Posterior vena cava (tissue), 2 donors: ENCODE measurements at regions of chr19 and their contacts with region 1.

Region 1: DNA sequence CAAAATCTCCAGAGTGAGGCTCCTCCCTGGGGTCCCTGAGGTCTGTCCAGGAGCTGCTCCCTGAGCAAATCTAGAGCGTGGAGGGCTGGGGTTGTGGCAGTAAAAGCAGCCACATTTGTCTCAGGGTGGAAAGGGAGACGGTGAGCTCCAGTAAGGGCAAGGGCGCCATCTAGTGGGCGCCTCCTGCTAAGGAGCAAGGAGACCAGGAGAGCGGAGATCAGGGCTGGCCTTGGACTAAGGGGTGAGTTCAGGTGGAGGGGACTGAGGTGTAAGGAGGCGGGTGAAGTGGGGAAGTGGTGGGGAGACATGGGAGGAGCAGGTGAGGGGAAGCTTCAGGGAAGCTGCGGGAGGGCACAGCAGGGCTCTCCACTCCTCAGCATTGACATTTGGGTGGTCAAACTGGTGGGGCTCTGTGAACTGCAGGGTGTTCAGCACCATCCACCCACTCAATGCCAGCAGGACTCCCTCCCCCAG is 5.3 kb upstream of the CEACAM21 start:
- DNase-seq: peak; percentile 94

Region 2: GRCh38 chr19:41449079-41449864 is 121.4 kb before region 1 on chr19:
- intact Hi-C with region 1: loop called in 1 of 2 experiments (anchors 5 kb)
- DNase-seq: peak; percentile 91

Region 3: GRCh38 chr19:41531438-41532311 is 39.0 kb before region 1 on chr19:
- intact Hi-C with region 1: no loop called
- DNase-seq: peak; percentile 92

Region 4: GRCh38 chr19:41599175-41599966 is 28.7 kb after region 1 on chr19:
- intact Hi-C with region 1: no loop called
- DNase-seq: no peak